ENCODE measurements at regions of chr12 and their contacts with region 1.

Region 1: GRCh38 chr12:47216150-47216677 is 136.5 kb upstream of the AMIGO2 start:
- DNase-seq: no peak
- ATAC-seq: no peak
- H3K4me3 ChIP-seq: no peak overlapping the region
- H3K27ac ChIP-seq: no peak overlapping the region; the same call in 1 of the 2 replicates
- H3K4me1 ChIP-seq: peaks cover 44% of the 10 kb centered on the region
- H3K27me3 ChIP-seq: no peaks in the 10 kb centered on the region
- CTCF ChIP-seq: no peak

Region 2: GRCh38 chr12:47095446-47096236 is 120.6 kb before region 1 on chr12:
- CTCF ChIA-PET with region 1: interaction called, 3 read pairs
- POLR2A ChIA-PET with region 1: no interaction called
- intact Hi-C with region 1: loop called (anchors 5 kb)
- DNase-seq: peak; percentile 92
- ATAC-seq: peak; percentile 87
- H3K4me3 ChIP-seq: peak overlapping the region; percentile 36
- H3K27ac ChIP-seq: peak overlapping the region; percentile 61
- H3K4me1 ChIP-seq: peaks cover 54% of the 10 kb centered on the region
- H3K27me3 ChIP-seq: no peaks in the 10 kb centered on the region
- CTCF ChIP-seq: no peak

Region 3: GRCh38 chr12:47178014-47178413 is 38.2 kb before region 1 on chr12:
- CTCF ChIA-PET with region 1: no interaction called
- POLR2A ChIA-PET with region 1: no interaction called
- intact Hi-C with region 1: no loop called
- DNase-seq: no peak
- ATAC-seq: no peak
- H3K4me3 ChIP-seq: no peak overlapping the region
- H3K27ac ChIP-seq: no peak overlapping the region
- H3K4me1 ChIP-seq: no peaks in the 10 kb centered on the region
- H3K27me3 ChIP-seq: no peaks in the 10 kb centered on the region
- CTCF ChIP-seq: no peak

Region 4: GRCh38 chr12:47190271-47190750 is 25.9 kb before region 1 on chr12:
- CTCF ChIA-PET with region 1: no interaction called
- POLR2A ChIA-PET with region 1: no interaction called
- intact Hi-C with region 1: no loop called
- DNase-seq: peak; percentile 56
- ATAC-seq: 0 out of 2 replicates have a peak, but pooled peaks have one; percentile 33
- H3K4me3 ChIP-seq: no peak overlapping the region
- H3K27ac ChIP-seq: no peak overlapping the region
- H3K4me1 ChIP-seq: peaks cover 18% of the 10 kb centered on the region
- H3K27me3 ChIP-seq: no peaks in the 10 kb centered on the region
- CTCF ChIP-seq: no peak

Region 5: GRCh38 chr12:47828608-47829536 is 612.7 kb after region 1 on chr12:
- CTCF ChIA-PET with region 1: no interaction called
- POLR2A ChIA-PET with region 1: no interaction called
- intact Hi-C with region 1: no loop called
- DNase-seq: peak; percentile 90
- ATAC-seq: peak; percentile 77
- H3K4me3 ChIP-seq: peak overlapping the region; percentile 20; the same call in 1 of the 2 replicates
- H3K27ac ChIP-seq: peak overlapping the region; percentile 23
- H3K4me1 ChIP-seq: peaks cover 45% of the 10 kb centered on the region
- H3K27me3 ChIP-seq: no peaks in the 10 kb centered on the region
- CTCF ChIP-seq: no peak

Measured in PC-3 (cell line).